Adrenal gland (tissue), 19 donors: ENCODE measurements at regions of chr6 and their contacts with region 1.

Region 1: GRCh38 chr6:92376691-92377090 is 1042.7 kb downstream of the EPHA7 start:
- DNase-seq: no peak
- H3K4me3 ChIP-seq: no peak overlapping the region
- H3K27ac ChIP-seq: no peak overlapping the region
- H3K4me1 ChIP-seq: no peaks in the 10 kb centered on the region
- H3K27me3 ChIP-seq: no peaks in the 10 kb centered on the region
- CTCF ChIP-seq: no peak
- POLR2A ChIP-seq: no peak

Region 2: GRCh38 chr6:92341224-92341623 is 35.5 kb before region 1 on chr6:
- intact Hi-C with region 1: no loop called
- DNase-seq: no peak
- H3K4me3 ChIP-seq: no peak overlapping the region
- H3K27ac ChIP-seq: no peak overlapping the region
- H3K4me1 ChIP-seq: no peaks in the 10 kb centered on the region
- H3K27me3 ChIP-seq: no peaks in the 10 kb centered on the region
- CTCF ChIP-seq: no peak
- POLR2A ChIP-seq: no peak

Region 3: GRCh38 chr6:92521553-92521952 is 144.9 kb after region 1 on chr6:
- intact Hi-C with region 1: no loop called
- DNase-seq: no peak
- H3K4me3 ChIP-seq: no peak overlapping the region
- H3K27ac ChIP-seq: no peak overlapping the region
- H3K4me1 ChIP-seq: no peaks in the 10 kb centered on the region
- H3K27me3 ChIP-seq: no peaks in the 10 kb centered on the region
- CTCF ChIP-seq: no peak
- POLR2A ChIP-seq: no peak

Region 4: GRCh38 chr6:93654548-93654947 is 1277.9 kb after region 1 on chr6:
- intact Hi-C with region 1: loop called in 1 of 2 experiments (anchors 10 kb)
- DNase-seq: no peak
- H3K4me3 ChIP-seq: no peak overlapping the region
- H3K27ac ChIP-seq: no peak overlapping the region
- H3K4me1 ChIP-seq: no peaks in the 10 kb centered on the region
- H3K27me3 ChIP-seq: no peaks in the 10 kb centered on the region
- CTCF ChIP-seq: no peak
- POLR2A ChIP-seq: no peak